IMR-90 (cell line): ENCODE measurements at regions of chr10 and their contacts with region 1.

Region 1: GRCh38 chr10:124741281-124741921 is 2.8 kb downstream of the FAM53B start:
- DNase-seq: peak; percentile 64
- ATAC-seq: peak; percentile 28
- H3K4me3 ChIP-seq: no peak overlapping the region
- H3K27ac ChIP-seq: no peak overlapping the region
- H3K4me1 ChIP-seq: peaks cover 18% of the 10 kb centered on the region
- H3K27me3 ChIP-seq: no peaks in the 10 kb centered on the region
- CTCF ChIP-seq: peak; percentile 82
- POLR2A ChIP-seq: no peak
- RAD21 ChIP-seq: peak; percentile 76

Region 2: DNA sequence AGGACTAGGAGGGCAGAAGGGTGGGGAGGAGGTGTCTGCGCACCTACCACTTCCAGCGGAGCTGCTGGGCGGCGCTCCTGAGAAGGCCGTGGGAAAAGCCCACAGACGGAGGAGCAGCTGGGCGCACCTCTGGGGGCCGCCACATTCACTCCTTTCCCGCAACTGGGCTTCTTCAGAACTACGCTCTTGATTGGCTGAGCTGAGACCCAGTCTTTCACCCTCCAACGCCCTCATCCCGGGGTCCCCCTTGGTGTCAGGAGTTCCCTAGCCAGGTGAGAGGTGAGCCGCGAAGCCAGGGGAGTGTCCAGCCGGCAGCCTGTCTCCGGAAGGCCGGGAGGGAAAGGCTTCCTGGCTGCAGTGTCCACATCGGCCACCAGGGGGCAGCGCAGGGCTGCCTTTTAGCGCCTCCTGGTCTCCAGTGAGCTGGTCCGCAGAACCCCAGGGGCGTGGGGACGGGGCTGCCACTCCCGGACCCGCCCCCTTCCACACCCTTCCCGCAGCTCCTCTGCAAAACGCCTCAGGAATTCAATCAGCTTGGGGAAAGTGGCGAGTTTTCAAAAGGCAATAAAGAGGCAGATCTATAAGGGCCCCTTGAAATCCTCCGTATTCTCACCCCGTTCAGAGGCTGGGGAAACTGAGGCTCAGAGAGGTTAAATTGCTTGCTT is 746.9 kb before region 1 on chr10:
- CTCF ChIA-PET with region 1: no interaction called
- POLR2A ChIA-PET with region 1: no interaction called
- dilution Hi-C with region 1: no loop called
- in situ Hi-C with region 1: no loop called
- intact Hi-C with region 1: loop called (anchors 5 kb)
- DNase-seq: peak; percentile 63
- ATAC-seq: peak; percentile 91
- H3K4me3 ChIP-seq: no peak overlapping the region
- H3K27ac ChIP-seq: no peak overlapping the region
- H3K4me1 ChIP-seq: peaks cover 3% of the 10 kb centered on the region; the same call in 1 of the 2 replicates
- H3K27me3 ChIP-seq: peaks cover 4% of the 10 kb centered on the region; the same call in 1 of the 2 replicates
- CTCF ChIP-seq: peak; percentile 89
- POLR2A ChIP-seq: no peak
- RAD21 ChIP-seq: peak; percentile 85

Region 3: DNA sequence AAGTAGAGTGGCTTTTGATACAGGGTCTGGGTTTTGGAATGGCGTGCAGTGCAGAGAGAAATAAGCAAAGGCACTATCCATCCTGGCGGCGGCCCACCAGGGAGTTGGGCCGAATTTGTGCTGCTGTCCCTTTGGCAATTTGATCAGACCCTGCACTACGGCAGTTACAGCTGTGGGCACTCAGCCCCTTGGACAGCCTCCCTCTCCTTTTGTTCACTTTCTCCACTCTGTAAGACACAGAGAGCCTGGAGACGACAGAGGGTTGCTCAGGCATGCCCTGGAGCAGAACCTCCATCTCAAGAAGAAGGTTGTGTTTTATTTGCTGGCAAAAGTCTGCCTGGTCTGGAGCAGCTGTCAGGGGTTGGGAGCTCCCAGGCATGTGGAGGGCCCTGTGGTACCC is 223.9 kb before region 1 on chr10:
- CTCF ChIA-PET with region 1: no interaction called
- POLR2A ChIA-PET with region 1: no interaction called
- dilution Hi-C with region 1: no loop called
- in situ Hi-C with region 1: no loop called
- intact Hi-C with region 1: no loop called
- DNase-seq: no peak
- ATAC-seq: no peak
- H3K4me3 ChIP-seq: no peak overlapping the region
- H3K27ac ChIP-seq: no peak overlapping the region
- H3K4me1 ChIP-seq: no peaks in the 10 kb centered on the region; the same call in 1 of the 2 replicates
- H3K27me3 ChIP-seq: peaks cover 2% of the 10 kb centered on the region; the same call in 1 of the 2 replicates
- CTCF ChIP-seq: no peak
- POLR2A ChIP-seq: no peak
- RAD21 ChIP-seq: no peak

Region 4: GRCh38 chr10:124530215-124530665 is 211.2 kb before region 1 on chr10:
- CTCF ChIA-PET with region 1: interaction called, 12 read pairs
- POLR2A ChIA-PET with region 1: no interaction called
- dilution Hi-C with region 1: no loop called
- in situ Hi-C with region 1: loop called (anchors 5 kb)
- intact Hi-C with region 1: loop called (anchors 1 kb)
- DNase-seq: peak; percentile 74
- ATAC-seq: peak; percentile 99
- H3K4me3 ChIP-seq: no peak overlapping the region
- H3K27ac ChIP-seq: no peak overlapping the region
- H3K4me1 ChIP-seq: no peaks in the 10 kb centered on the region
- H3K27me3 ChIP-seq: no peaks in the 10 kb centered on the region
- CTCF ChIP-seq: peak; percentile 96
- POLR2A ChIP-seq: no peak
- RAD21 ChIP-seq: peak; percentile 98

Region 5: GRCh38 chr10:124632064-124632531 is 109.3 kb before region 1 on chr10:
- CTCF ChIA-PET with region 1: no interaction called
- POLR2A ChIA-PET with region 1: no interaction called
- dilution Hi-C with region 1: no loop called
- in situ Hi-C with region 1: no loop called
- intact Hi-C with region 1: loop called (anchors 5 kb)
- DNase-seq: no peak
- ATAC-seq: no peak
- H3K4me3 ChIP-seq: no peak overlapping the region
- H3K27ac ChIP-seq: no peak overlapping the region
- H3K4me1 ChIP-seq: no peaks in the 10 kb centered on the region; the same call in 1 of the 2 replicates
- H3K27me3 ChIP-seq: no peaks in the 10 kb centered on the region
- CTCF ChIP-seq: peak; percentile 25; the same call in 1 of the 2 replicates
- POLR2A ChIP-seq: no peak
- RAD21 ChIP-seq: peak; percentile 46

Region 6: DNA sequence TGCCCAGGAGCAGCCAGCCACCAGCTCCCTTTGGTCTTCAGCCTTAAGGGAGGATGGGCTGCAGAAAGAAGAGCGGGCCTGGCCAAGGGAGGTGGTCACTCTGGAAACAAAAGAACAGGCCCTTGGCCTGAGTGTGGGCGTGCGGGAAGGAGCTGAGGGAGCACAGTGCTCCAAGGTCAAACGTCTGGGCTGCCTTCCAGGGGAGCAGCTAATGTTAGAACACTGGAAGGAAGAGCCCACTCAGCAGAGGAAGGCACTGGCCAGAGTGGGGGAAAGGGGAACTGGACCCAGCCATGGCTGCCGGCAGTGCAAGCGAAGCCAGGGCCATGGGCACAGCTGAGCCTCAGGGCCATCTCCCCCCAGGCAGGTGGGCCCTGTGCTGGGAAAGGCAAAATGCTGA is 40.0 kb before region 1 on chr10:
- CTCF ChIA-PET with region 1: interaction called, 3 read pairs
- POLR2A ChIA-PET with region 1: no interaction called
- dilution Hi-C with region 1: no loop called
- in situ Hi-C with region 1: no loop called
- intact Hi-C with region 1: loop called (anchors 5 kb)
- DNase-seq: peak; percentile 71
- ATAC-seq: peak; percentile 84
- H3K4me3 ChIP-seq: no peak overlapping the region
- H3K27ac ChIP-seq: peak overlapping the region; percentile 23; the same call in 1 of the 2 replicates
- H3K4me1 ChIP-seq: peaks cover 17% of the 10 kb centered on the region
- H3K27me3 ChIP-seq: no peaks in the 10 kb centered on the region
- CTCF ChIP-seq: no peak
- POLR2A ChIP-seq: no peak
- RAD21 ChIP-seq: no peak

Region 7: DNA sequence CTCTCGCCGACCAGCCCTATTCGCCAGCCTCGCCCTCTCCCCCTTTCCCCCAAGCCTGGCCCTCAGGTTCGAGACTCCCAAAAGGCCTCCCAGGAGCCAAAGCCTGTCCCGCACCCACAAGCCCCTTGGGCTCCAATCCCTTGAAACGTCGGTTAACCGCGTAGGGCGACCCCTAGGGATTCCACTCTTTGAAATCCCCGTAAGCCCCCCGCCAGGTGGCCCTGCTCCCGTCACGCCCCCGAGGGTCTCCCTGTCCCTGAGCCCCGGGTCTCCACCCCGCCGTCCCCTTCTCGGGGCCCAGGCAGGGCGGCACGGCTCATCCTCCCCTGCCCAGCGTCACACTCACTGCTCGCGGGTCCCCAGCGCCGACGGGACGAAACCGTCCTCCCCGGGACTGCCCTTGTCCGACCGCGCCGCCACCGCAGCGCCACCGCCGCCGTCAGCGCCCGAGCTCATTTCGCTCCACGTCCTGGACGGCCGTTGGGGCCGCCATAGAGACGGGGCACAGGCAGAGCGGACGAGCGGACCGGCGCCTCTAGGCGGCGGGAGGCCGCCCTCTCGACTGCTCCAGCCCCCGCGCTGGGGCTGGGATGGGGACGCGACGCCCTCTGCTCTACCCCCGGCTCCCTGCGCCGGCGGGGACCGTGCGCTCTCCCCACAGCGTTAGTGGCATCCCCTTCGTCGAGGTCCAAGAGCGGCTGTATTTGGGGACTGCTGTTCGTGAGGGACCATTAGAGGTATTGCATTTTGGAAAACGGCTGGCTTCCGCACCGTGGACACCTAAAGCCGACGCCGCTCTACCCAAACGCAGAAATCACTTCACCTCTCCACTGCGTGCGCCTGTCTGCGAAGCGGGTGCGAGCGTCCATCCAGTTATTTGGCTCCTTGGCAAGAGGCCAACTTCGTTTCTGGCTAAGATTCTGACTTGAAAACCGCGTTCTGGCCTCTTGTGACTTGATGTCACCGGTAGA is 50.3 kb after region 1 on chr10 and contains the start of gene EEF1AKMT2:
- CTCF ChIA-PET with region 1: no interaction called
- POLR2A ChIA-PET with region 1: no interaction called
- dilution Hi-C with region 1: no loop called
- in situ Hi-C with region 1: no loop called
- intact Hi-C with region 1: loop called (anchors 2 kb)
- DNase-seq: peak; percentile 82
- ATAC-seq: peak; percentile 99
- H3K4me3 ChIP-seq: peak within 1 kb of the TSS; percentile 87
- H3K27ac ChIP-seq: peak within 1 kb of the TSS; percentile 84
- H3K4me1 ChIP-seq: no peaks in the 10 kb centered on the region; the same call in 1 of the 2 replicates
- H3K27me3 ChIP-seq: no peaks in the 10 kb centered on the region
- CTCF ChIP-seq: no peak
- POLR2A ChIP-seq: peak; percentile 82; the same call in 1 of the 2 replicates
- RAD21 ChIP-seq: no peak; the same call in 1 of the 2 replicates
- total RNA-seq, gene EEF1AKMT2: 9.7 and 22.8 TPM in 2 replicates